ENCODE measurements at regions of chr6 and their contacts with region 1.

Region 1: DNA sequence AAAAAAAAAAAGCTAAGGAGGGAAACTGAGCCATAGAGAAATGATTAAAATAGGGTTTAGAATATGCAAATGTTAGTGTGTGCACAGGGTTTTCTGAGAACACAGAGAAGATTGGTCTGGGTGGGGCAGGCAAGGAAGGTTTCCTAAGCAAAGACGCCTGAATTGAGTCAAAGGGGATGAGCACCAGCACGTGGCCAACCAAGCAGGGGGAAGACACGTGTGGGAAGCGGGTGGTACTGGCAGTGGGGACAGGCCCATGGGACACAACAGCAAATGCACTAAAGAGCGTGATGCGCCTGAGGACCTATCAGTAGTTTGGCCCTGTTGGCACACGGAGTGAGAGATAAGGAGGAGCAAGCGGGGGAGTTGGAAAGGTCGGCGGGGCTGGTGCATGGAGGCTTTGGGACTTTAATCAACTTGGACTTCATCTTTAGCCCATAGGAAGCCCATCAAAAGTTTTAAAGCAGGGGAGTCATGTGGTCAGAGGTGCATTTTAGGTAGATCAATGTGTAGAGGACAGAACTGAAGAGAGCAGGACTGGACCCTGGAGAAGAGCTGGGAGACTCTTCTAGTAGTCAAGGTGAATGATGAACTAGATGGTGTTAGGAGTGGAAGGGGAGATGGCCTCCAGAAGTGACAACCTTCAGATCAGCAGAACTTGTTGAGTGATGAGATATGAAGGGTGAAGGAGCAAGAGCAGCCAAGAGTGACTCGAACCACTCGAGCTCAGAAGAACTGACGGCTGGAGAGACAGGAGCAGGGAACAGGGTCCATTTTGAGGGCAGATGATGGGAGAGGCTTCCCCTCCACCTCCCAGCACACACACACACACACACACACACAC is 40.2 kb upstream of the MAP3K4 start:
- DNase-seq: no peak
- H3K4me3 ChIP-seq: no peak overlapping the region
- H3K27ac ChIP-seq: no peak overlapping the region
- H3K4me1 ChIP-seq: no peaks in the 10 kb centered on the region
- H3K27me3 ChIP-seq: peaks cover 10% of the 10 kb centered on the region
- CTCF ChIP-seq: no peak

Region 2: GRCh38 chr6:161101517-161101916 is 150.1 kb after region 1 on chr6:
- CTCF ChIA-PET with region 1: no interaction called
- POLR2A ChIA-PET with region 1: interaction called, 11 read pairs
- intact Hi-C with region 1: no loop called
- DNase-seq: peak; percentile 24
- H3K4me3 ChIP-seq: no peak overlapping the region
- H3K27ac ChIP-seq: no peak overlapping the region
- H3K4me1 ChIP-seq: no peaks in the 10 kb centered on the region
- H3K27me3 ChIP-seq: no peaks in the 10 kb centered on the region
- CTCF ChIP-seq: peak; percentile 50

Measured in A673 (cell line).